Activated CD4-positive, alpha-beta memory T cell treated with anti-CD3 and anti-CD28 coated beads for 36 hours (primary cell): ENCODE measurements at regions of chr12 and their contacts with region 1.

Region 1: GRCh38 chr12:56763753-56764657 is 881 bp downstream of the HSD17B6 start:
- DNase-seq: no peak
- H3K4me3 Mint-ChIP-seq: no peak overlapping the region
- H3K27ac Mint-ChIP-seq: no peak overlapping the region
- H3K4me1 Mint-ChIP-seq: peaks cover under 1% of the 10 kb centered on the region
- H3K27me3 Mint-ChIP-seq: no peaks in the 10 kb centered on the region

Region 2: DNA sequence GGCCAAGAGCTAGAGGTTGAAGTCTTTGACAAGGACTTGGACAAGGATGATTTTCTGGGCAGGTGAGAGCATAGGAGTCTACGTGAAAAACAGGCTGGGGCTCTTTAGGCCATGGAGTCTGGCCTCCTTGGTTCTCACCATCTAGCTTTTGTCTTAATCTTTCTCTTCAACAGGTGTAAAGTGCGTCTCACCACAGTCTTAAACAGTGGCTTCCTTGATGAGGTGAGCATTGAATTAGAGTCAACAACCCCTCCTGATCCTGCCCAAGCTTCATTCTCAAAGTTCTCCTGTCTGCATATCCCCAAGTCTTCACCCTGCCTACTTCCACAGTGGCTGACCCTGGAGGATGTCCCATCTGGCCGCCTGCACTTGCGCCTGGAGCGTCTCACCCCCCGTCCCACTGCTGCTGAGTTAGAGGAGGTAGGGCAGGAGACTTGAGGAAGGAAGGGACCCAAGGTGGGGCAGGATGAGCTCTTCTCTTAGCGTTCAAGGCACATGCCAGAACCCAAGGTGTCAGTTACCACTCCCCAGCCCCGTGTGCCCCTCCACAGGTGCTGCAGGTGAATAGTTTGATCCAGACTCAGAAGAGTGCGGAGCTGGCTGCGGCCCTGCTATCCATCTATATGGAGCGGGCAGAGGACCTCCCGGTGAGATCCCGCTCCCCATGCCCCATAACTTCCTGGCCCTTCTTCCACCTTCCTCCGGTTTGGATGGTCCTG is 626.0 kb before region 1 on chr12:
- CTCF ChIA-PET with region 1: no interaction called
- POLR2A ChIA-PET with region 1: no interaction called
- intact Hi-C with region 1: no loop called
- DNase-seq: no peak
- H3K4me3 Mint-ChIP-seq: no peak overlapping the region
- H3K27ac Mint-ChIP-seq: peak overlapping the region; percentile 50
- H3K4me1 Mint-ChIP-seq: peaks cover 61% of the 10 kb centered on the region
- H3K27me3 Mint-ChIP-seq: no peaks in the 10 kb centered on the region

Region 3: DNA sequence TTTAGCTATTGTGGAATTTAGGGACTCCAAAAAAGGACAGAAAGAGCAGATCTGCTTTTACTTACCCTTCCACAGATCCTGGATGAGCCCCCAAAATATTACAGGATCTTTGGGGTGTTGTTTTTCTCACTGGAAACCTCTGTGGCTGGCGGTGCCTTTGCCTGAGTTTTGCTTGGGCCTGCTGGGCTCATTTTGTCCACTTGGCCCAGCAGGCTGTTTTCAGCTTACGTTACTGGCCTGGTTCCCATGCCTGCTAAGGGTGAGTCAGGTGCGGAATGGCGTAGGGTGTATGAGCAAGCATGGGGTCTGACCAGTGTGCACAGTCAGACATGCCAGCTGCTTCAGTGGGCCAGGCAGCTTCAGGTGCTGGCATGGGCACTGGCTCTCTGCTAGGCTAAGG is 44.9 kb after region 1 on chr12:
- CTCF ChIA-PET with region 1: no interaction called
- POLR2A ChIA-PET with region 1: no interaction called
- intact Hi-C with region 1: no loop called
- DNase-seq: no peak
- H3K4me3 Mint-ChIP-seq: no peak overlapping the region
- H3K27ac Mint-ChIP-seq: no peak overlapping the region
- H3K4me1 Mint-ChIP-seq: no peaks in the 10 kb centered on the region
- H3K27me3 Mint-ChIP-seq: peaks cover 6% of the 10 kb centered on the region

Region 4: DNA sequence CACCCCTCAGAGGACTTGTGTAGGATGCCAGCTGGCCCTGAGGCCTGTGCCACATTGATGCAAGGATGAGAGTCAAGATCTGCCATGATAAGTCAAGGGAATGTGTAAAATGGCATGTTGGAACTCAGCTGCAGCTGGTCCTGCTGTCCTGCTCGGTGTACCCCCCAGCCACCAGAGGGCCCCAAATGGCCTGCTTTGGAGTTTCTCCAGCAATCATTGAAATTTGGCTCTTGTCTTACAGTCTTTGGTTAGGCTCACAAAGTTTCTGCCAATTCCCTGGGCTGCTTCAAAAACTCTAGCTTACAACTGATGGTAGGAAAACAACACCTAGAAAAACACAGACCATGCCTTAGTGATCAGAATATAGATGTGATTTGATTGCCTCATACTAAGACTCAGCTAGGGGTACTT is 75.9 kb after region 1 on chr12:
- CTCF ChIA-PET with region 1: interaction called, 4 read pairs
- POLR2A ChIA-PET with region 1: no interaction called
- intact Hi-C with region 1: loop called (anchors 5 kb)
- DNase-seq: peak; percentile 57
- H3K4me3 Mint-ChIP-seq: no peak overlapping the region
- H3K27ac Mint-ChIP-seq: no peak overlapping the region
- H3K4me1 Mint-ChIP-seq: peaks cover 19% of the 10 kb centered on the region
- H3K27me3 Mint-ChIP-seq: no peaks in the 10 kb centered on the region